ENCODE measurements at regions of chr1 and their contacts with region 1.

Region 1: GRCh38 chr1:28886731-28887418 is 27.5 kb upstream of the EPB41 start:
- DNase-seq: peak; percentile 95

Region 2: DNA sequence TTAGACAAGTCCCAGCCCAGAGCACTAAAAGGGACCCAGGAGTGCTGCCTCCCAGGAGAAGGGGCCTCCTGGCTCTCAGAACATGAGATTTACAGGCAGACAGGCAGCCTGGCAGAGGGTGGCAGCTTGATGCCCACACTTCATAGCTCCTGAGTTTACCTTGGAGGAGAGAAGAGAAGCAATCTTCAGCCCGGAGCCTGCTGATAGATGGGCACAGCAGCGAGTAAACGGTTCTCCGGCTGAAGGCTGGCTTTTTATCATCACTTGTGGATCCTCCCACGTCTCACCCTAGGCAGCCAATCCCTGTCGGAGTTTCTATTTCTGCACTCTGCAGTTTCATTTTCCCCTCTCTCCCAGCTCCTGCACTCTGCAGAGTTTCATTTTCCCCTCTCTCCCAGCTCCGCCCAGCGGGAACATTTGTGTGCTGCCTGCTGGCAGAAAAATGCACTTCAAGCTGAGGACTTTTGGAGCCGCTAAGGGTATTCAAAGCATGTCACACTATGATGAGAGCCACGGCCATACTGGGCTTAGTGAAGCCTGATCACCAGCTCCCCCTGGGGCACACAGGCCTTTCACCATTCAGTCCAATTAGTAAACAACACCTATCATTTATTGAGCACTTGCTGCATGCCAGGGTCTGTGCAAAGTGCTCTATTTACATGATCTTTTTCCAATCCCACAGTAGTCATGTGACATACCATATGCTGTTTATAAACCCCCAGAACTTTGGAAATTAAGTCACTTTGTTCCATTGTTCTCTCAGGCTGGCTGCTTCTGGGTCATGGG is 1214.7 kb before region 1 on chr1 and contains the start of gene IFI6:
- intact Hi-C with region 1: no loop called
- DNase-seq: peak; percentile 94
- total RNA-seq, gene IFI6: 32.4 TPM

Region 3: GRCh38 chr1:28983509-28984310 is 96.8 kb after region 1 on chr1:
- intact Hi-C with region 1: loop called (anchors 1 kb)
- DNase-seq: peak; percentile 76

Region 4: DNA sequence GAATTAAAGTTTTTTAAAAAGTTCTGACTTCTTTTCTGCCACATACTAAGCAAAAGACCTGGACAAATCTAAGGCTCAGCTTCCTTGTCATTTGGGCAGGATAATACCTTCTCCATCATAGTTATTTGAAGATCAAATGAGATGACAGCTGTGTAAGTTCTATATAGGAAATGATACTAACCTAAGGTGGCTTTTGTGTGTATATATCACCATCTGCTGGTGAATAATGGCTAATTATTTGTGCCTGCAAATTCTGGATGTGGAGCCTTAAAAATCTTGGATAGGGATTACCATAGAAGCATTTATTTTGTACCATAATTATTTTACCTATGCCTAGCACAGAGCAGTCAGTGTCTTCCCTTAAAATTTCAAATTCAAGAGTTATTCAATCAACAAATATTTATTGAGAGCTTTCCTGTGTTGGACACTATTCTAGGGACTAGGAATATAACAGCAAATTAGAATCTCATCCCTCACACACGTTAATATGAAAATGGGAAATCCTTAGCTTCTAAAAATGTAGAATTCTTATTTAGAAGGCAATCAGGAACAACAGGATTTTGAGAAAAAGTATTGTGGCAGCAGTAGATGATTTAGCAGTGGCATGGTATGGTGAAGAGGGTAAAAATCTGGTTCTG is 147.1 kb after region 1 on chr1:
- intact Hi-C with region 1: loop called (anchors 1 kb)
- DNase-seq: no peak

Region 5: GRCh38 chr1:29090937-29091618 is 204.2 kb after region 1 on chr1:
- intact Hi-C with region 1: no loop called
- DNase-seq: no peak

Region 6: DNA sequence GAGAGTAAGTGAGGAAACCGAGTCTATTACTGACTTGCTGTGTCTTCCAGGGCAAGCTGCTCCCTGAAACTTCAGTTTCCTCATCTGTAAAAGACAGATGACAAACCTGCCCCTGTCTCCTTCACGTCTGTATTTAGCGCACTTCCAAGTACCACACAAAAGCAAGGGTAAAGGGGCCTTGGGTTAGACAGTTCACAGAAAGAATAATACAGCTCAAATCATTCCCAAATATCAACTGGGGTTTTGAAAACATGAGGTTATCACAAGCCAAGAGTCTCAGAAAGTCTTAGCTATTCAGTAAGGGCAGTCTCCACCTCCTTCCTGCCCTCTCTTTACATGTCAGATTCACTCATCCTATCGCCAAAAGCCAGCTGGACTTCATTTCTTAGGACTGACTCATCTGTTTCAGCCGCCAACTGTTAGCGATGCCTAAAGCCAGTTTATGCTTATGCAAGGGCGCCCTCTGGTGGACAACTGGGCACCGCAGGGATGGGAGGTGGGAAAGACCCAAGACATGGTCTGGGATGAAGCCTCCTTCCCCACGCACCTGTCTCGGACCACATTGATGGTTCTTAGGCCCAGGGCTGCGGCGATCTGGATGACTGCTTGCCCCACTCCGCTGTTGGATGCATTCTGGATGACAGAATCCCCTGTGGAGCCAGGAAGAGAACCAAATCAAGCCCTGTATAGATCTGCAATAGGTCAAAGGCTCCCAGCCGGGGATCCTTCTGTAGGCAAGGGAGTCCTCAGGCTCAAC is 315.9 kb after region 1 on chr1:
- intact Hi-C with region 1: loop called (anchors 1 kb)
- DNase-seq: peak; percentile 96

Region 7: GRCh38 chr1:30707412-30708360 is 1820.8 kb after region 1 on chr1:
- intact Hi-C with region 1: loop called (anchors 5 kb)
- DNase-seq: peak; percentile 86